Left colon (tissue), 2 donors: ENCODE measurements at regions of chr16 and their contacts with region 1.

Region 1: DNA sequence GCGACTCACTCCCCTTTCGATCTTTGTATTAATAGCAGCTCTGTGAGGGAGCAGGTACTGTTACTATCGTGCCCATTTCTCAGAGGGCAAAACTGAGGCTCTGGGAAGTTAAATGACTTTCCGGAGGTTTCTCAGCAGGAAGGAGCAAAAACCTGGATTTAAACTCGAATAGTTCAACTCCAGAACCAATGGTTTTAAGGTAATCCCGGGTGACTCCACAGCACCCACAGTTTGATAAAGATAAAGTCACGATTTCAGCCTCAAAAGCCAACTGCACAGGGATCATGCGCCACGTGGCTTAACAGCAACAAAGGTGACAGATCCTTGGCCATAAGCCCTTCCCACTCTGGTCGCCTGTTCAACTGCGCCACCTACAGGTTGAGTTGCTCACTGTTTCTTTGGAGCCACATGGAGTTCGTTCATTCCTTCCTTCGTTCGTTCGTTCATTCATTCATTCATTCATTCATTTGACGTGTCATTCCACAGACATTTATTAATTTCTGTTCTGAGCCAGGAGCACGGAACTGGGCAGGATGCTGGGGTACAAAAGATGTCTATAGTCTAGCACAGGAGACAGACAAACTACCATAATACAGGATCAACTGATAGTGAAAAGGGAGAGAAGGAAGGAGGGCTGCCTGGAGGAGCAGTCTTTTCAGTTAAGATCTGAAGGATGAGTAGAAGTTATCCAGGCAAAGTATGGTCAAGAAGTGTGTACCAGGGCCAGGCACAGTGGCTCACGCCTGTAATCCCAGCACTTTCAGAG is 134.8 kb downstream of the HS3ST2 start:
- DNase-seq: peak; percentile 54 to 72
- ATAC-seq: peak; percentile 83

Region 2: GRCh38 chr16:22670551-22671041 is 278.2 kb before region 1 on chr16:
- intact Hi-C with region 1: loop called in 1 of 2 experiments (anchors 10 kb)
- DNase-seq: no peak
- ATAC-seq: no peak